ENCODE measurements at regions of chr9 and their contacts with region 1.

Region 1: GRCh38 chr9:78035383-78035993 is 3.9 kb upstream of the GNAQ start:
- DNase-seq: peak; percentile 37
- CTCF ChIP-seq: peak; percentile 77

Region 2: DNA sequence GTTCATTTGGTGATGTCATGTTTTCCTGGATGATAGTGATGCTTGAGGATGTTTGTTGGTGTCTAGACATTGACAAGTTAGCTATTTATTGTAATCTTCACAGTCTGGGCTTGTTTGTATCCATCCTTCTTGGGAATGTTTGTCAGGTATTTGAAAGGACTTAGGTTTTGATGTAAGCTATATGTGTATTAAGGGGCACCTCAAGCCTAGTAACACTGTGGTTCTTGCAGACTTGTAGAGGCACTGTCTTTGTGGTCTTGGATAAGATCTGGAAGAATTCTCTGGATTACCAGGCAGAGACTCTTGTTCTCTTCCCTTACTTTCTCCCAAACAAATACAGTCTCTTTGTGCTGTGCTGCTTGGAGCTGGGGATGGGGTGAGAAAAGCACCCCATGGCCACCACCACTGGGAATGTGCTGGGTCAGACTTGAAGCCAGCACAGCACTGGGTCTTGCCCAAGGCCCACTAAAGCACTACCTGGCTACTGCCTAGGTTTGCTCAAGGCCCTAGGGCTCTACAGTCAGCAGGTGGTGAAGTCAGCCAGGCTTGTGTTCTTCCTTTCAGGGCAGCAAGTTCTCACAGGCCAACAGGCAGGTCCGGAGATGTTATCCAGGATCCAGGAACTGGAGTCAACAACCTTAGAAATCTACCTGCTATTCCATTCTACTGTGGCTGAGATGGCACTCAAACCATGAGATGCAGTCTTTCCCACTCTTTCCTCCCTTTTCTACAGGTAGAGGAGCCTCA is 338.1 kb before region 1 on chr9:
- CTCF ChIA-PET with region 1: no interaction called
- POLR2A ChIA-PET with region 1: no interaction called
- DNase-seq: no peak
- CTCF ChIP-seq: no peak

Region 3: GRCh38 chr9:77864211-77864889 is 171.1 kb before region 1 on chr9:
- CTCF ChIA-PET with region 1: interaction called, 10 read pairs
- POLR2A ChIA-PET with region 1: no interaction called
- DNase-seq: peak; percentile 12
- CTCF ChIP-seq: peak; percentile 9

Region 4: DNA sequence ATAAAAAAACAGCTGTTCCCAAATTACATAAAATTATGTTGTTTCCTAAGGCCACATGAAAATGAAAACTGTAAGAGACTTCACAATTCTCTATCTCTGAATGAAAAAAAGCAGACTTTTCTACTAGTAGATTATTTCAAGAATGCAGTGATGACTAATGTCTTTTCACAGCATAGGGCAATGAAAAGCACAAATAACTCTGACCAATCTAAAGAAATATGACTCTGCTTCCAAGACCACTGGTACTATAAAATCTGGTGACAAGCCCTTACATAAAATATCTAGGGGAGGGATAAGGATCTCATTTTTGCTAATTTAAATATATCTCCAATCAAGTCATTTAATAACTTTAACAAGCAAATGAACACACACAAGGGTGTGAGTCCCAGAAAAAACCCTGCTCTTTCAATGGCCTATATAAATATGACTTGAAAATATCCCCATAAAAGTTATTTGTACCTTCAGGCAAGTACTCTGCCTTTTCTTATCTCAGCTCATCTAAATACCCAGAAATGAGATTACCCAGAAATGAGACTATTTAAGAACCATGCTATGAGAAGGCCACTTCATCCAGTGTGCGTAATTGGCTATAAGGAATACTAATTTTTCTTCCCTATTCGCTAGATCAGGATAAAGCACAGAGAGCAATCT is 109.1 kb before region 1 on chr9:
- CTCF ChIA-PET with region 1: no interaction called
- POLR2A ChIA-PET with region 1: no interaction called
- DNase-seq: no peak
- CTCF ChIP-seq: no peak

Region 5: GRCh38 chr9:77965445-77966123 is 69.9 kb before region 1 on chr9:
- CTCF ChIA-PET with region 1: no interaction called
- POLR2A ChIA-PET with region 1: no interaction called
- DNase-seq: no peak
- CTCF ChIP-seq: no peak

Region 6: GRCh38 chr9:77977210-77977611 is 58.3 kb before region 1 on chr9:
- CTCF ChIA-PET with region 1: interaction called, 11 read pairs
- POLR2A ChIA-PET with region 1: no interaction called
- DNase-seq: no peak
- CTCF ChIP-seq: peak; percentile 35

Region 7: GRCh38 chr9:77997611-77998284 is 37.7 kb before region 1 on chr9:
- CTCF ChIA-PET with region 1: interaction called, 17 read pairs
- POLR2A ChIA-PET with region 1: no interaction called
- DNase-seq: no peak
- CTCF ChIP-seq: no peak

Measured in GM10248 (cell line).